Right cardiac atrium (tissue), 5 donors: ENCODE measurements at regions of chr1 and their contacts with region 1.

Region 1: DNA sequence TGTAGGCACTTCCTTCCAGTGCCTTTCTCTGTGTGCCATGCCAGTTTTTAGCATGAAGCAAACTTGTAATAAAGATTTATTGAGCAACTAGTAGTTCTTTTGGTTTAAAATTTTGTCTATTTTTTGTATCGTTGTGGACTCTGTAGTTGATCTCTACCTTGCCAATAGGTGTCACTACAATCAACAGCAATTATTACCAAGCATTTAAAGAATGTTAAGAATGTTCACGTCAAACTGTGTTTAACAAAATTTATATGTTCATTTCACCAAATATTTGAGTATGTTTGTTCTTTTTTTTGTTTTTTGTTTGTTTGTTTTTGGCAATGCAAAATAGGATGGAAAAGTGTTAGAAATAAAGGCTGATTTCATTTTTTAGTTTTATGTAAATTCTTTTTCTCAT is 208.1 kb downstream of the PATJ start:
- DNase-seq: no peak
- ATAC-seq: peak in 1 of 2 donors; percentile 36
- H3K4me3 ChIP-seq: no peak overlapping the region
- H3K27ac ChIP-seq: no peak overlapping the region
- H3K4me1 ChIP-seq: no peaks in the 10 kb centered on the region
- H3K27me3 ChIP-seq: no peaks in the 10 kb centered on the region

Region 2: GRCh38 chr1:61776091-61776490 is 174.3 kb before region 1 on chr1:
- intact Hi-C with region 1: no loop called
- DNase-seq: no peak
- ATAC-seq: no peak
- H3K4me3 ChIP-seq: no peak overlapping the region
- H3K27ac ChIP-seq: no peak overlapping the region
- H3K4me1 ChIP-seq: no peaks in the 10 kb centered on the region
- H3K27me3 ChIP-seq: no peaks in the 10 kb centered on the region

Region 3: GRCh38 chr1:62070384-62071011 is 120.1 kb after region 1 on chr1:
- intact Hi-C with region 1: loop called in 2 of 4 experiments (anchors 5 to 10 kb)
- DNase-seq: no peak
- ATAC-seq: no peak
- H3K4me3 ChIP-seq: no peak overlapping the region
- H3K27ac ChIP-seq: no peak overlapping the region
- H3K4me1 ChIP-seq: peaks cover 12% of the 10 kb centered on the region
- H3K27me3 ChIP-seq: no peaks in the 10 kb centered on the region